Activated B cell treated with CpG ODN at 0.5 μM for 24 hours (primary cell): ENCODE measurements at regions of chr16 and their contacts with region 1.

Region 1: DNA sequence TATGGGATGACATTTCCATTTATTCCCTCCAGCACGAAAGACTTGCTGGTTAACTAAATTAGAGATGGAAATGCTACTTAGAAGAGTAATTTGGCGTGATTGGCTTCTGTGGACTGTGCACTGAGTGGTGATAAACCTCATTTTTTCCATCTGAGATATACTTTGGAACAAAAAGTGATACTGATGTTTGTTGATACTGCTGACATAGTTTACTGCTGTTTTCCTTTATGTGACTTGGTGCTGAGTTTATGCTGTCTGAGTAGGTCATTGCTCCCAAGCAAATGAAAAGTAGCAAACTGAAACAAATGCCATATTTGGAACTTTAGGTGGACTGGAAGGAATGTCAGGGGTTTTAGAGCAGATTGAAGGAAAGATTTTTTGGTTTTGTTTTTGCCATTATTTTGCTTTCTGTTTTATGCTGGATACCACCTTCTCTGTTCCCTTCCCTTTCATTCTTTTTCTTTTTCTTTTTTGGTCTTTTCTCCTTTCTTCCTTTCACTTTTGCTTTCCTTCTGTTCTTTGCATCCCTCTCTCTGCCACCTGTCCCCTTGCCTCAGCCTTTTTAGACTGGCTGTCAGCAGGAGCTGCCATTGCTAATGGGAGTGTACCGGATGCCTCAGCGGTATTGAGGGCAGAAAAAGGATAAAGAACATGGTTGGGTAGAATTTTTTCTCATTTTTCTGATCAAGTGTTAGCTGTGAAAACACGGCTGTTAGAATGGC is 41.8 kb downstream of the NUP93 start:
- DNase-seq: no peak
- ATAC-seq: no peak
- H3K4me3 Mint-ChIP-seq: no peak overlapping the region
- H3K27ac Mint-ChIP-seq: no peak overlapping the region
- H3K4me1 Mint-ChIP-seq: peaks cover 13% of the 10 kb centered on the region
- H3K27me3 Mint-ChIP-seq: no peaks in the 10 kb centered on the region
- CTCF ChIP-seq: no peak

Region 2: GRCh38 chr16:56716761-56717160 is 55.0 kb before region 1 on chr16:
- CTCF ChIA-PET with region 1: no interaction called
- POLR2A ChIA-PET with region 1: no interaction called
- intact Hi-C with region 1: no loop called
- DNase-seq: no peak
- ATAC-seq: no peak
- H3K4me3 Mint-ChIP-seq: no peak overlapping the region
- H3K27ac Mint-ChIP-seq: no peak overlapping the region
- H3K4me1 Mint-ChIP-seq: no peaks in the 10 kb centered on the region
- H3K27me3 Mint-ChIP-seq: peaks cover 6% of the 10 kb centered on the region
- CTCF ChIP-seq: no peak

Region 3: GRCh38 chr16:56825826-56826225 is 54.1 kb after region 1 on chr16:
- CTCF ChIA-PET with region 1: no interaction called
- POLR2A ChIA-PET with region 1: no interaction called
- intact Hi-C with region 1: loop called (anchors 2 kb)
- DNase-seq: no peak
- ATAC-seq: no peak
- H3K4me3 Mint-ChIP-seq: no peak overlapping the region
- H3K27ac Mint-ChIP-seq: no peak overlapping the region
- H3K4me1 Mint-ChIP-seq: no peaks in the 10 kb centered on the region
- H3K27me3 Mint-ChIP-seq: no peaks in the 10 kb centered on the region
- CTCF ChIP-seq: no peak